ENCODE measurements at regions of chr7 and their contacts with region 1.

Region 1: GRCh38 chr7:82410461-82410860 is 33.1 kb downstream of the CACNA2D1 start:
- DNase-seq: no peak
- ATAC-seq: peak; percentile 5; the same call in 1 of the 3 replicates
- H3K4me3 ChIP-seq: no peak overlapping the region
- H3K27ac ChIP-seq: no peak overlapping the region
- H3K4me1 ChIP-seq: no peaks in the 10 kb centered on the region
- H3K27me3 ChIP-seq: no peaks in the 10 kb centered on the region
- CTCF ChIP-seq: no peak
- EP300 ChIP-seq: no peak
- POLR2A ChIP-seq: no peak
- RAD21 ChIP-seq: no peak

Region 2: DNA sequence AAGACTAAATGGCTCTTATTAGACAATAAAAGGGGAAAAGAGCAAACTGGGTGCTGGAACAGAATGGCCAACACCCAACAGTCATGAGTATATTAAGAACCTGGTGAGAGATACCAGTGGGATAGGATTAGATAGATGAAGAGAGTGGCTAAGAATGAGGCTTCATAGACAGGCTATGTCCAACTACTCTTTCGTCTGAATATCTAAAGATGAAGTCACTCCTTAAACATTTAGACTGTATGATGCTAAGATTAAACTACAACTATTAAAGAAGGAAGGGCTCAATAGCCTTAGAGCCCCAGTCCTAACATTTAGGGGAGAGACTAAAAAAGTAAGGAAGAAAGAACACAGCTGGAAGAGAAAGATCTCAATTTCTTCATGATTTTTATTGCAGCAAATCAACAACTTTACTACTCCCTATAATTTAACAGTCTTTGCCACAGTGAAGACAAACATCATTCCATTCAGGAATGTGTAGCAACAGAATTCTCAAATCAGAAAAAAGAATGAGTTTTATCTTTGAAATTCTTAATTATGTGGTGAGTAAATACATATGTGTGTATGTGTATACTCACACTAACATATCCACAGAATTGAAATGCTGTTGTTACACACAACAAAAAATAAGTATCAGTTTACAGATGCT is 12.5 kb before region 1 on chr7:
- CTCF ChIA-PET with region 1: interaction called, 6 read pairs
- POLR2A ChIA-PET with region 1: interaction called, 4 read pairs
- RAD21 ChIA-PET with region 1: interaction called, 19 read pairs
- SMC1A ChIA-PET with region 1: interaction called, 36 read pairs
- in situ Hi-C with region 1: no loop called
- intact Hi-C with region 1: no loop called
- DNase-seq: no peak
- ATAC-seq: peak; percentile 42
- H3K4me3 ChIP-seq: no peak overlapping the region
- H3K27ac ChIP-seq: no peak overlapping the region
- H3K4me1 ChIP-seq: no peaks in the 10 kb centered on the region
- H3K27me3 ChIP-seq: no peaks in the 10 kb centered on the region
- CTCF ChIP-seq: no peak
- EP300 ChIP-seq: no peak
- POLR2A ChIP-seq: no peak
- RAD21 ChIP-seq: no peak

Measured in GM12878 (cell line).